OCI-LY7 (cell line): ENCODE measurements at regions of chr6 and their contacts with region 1.

Region 1: DNA sequence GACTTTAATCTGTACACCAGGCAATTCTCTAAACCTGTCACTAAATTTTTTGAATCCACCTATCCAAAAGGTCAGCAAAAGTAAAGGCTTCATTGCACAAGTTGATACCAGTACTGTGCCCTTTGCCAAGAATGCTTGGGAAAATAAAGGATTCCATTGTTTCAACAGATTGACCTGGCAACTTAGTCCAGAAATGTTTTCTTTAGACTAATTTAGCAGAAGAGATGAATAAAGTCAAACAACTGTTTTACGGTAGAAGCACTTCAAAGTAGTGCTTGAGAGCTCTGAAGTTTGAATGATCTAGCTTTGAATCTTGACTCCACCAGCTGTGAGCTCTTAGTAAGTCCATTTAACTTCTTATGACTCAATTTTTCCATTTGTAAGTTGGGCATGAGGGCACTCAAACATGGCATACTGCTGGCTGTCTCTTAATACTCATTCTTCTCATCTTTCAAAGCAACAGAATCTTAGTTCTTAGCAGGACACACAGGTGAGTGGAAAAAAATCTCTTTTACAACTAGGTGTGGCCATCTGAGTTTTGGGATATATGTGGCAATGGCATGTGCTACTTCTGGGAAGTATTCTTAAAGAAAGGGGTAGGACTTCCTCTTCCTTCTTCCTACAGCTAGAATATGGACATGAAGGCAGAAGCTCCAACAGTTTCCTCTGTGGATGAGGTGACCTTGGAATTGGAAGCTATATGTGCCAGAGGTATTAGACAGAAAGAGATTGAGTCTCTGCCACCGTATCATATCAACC is 55.9 kb upstream of the LOC128125822 start:
- DNase-seq: no peak
- H3K4me3 ChIP-seq: no peak overlapping the region
- H3K27ac ChIP-seq: no peak overlapping the region
- H3K4me1 ChIP-seq: peaks cover 25% of the 10 kb centered on the region
- CTCF ChIP-seq: no peak

Region 2: GRCh38 chr6:63441266-63441956 is 75.0 kb before region 1 on chr6:
- CTCF ChIA-PET with region 1: no interaction called
- POLR2A ChIA-PET with region 1: no interaction called
- intact Hi-C with region 1: no loop called
- DNase-seq: peak; percentile 77
- H3K4me3 ChIP-seq: peak overlapping the region; percentile 72
- H3K27ac ChIP-seq: peak overlapping the region; percentile 56
- H3K4me1 ChIP-seq: peaks cover 4% of the 10 kb centered on the region
- CTCF ChIP-seq: peak; percentile 58

Region 3: GRCh38 chr6:63543982-63544381 is 27.6 kb after region 1 on chr6:
- CTCF ChIA-PET with region 1: no interaction called
- POLR2A ChIA-PET with region 1: interaction called, 11 read pairs
- intact Hi-C with region 1: no loop called
- DNase-seq: no peak
- H3K4me3 ChIP-seq: no peak overlapping the region
- H3K27ac ChIP-seq: no peak overlapping the region
- H3K4me1 ChIP-seq: no peaks in the 10 kb centered on the region
- CTCF ChIP-seq: no peak